ENCODE measurements at regions of chr22 and their contacts with region 1.

Region 1: DNA sequence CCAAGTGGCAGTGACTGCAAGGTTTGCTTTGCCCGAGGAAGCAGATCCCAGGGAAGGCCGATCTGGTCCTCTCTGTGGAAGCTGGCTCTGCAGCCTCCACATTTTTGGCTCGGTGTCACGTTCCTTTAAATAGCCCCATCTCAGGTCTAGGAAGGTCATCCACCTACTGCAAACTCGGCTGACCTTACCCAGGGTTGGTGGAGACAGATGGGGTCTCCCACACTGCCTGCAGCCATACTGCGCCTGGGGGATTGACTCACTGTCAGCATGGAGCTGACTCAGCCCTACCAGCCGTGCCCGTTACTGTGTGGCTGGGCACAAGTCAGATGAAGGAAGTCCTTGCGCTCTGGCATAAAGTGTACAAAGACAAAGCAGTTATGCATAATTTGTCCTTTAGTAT is 16.9 kb downstream of the CDPF1 start:
- DNase-seq: no peak
- ATAC-seq: no peak
- H3K4me3 ChIP-seq: no peak overlapping the region
- H3K4me3 Mint-ChIP-seq: no peak overlapping the region
- H3K27ac ChIP-seq: no peak overlapping the region
- H3K27ac Mint-ChIP-seq: no peak overlapping the region
- H3K4me1 ChIP-seq: no peaks in the 10 kb centered on the region
- H3K4me1 Mint-ChIP-seq: peaks cover under 1% of the 10 kb centered on the region
- H3K27me3 ChIP-seq: no peaks in the 10 kb centered on the region
- H3K27me3 Mint-ChIP-seq: no peaks in the 10 kb centered on the region
- CTCF ChIP-seq: no peak

Region 2: GRCh38 chr22:45817745-45818423 is 415.3 kb before region 1 on chr22:
- CTCF ChIA-PET with region 1: no interaction called
- POLR2A ChIA-PET with region 1: interaction called, 10 read pairs
- intact Hi-C with region 1: no loop called
- DNase-seq: no peak
- ATAC-seq: no peak
- H3K4me3 ChIP-seq: no peak overlapping the region
- H3K4me3 Mint-ChIP-seq: no peak overlapping the region
- H3K27ac ChIP-seq: no peak overlapping the region
- H3K27ac Mint-ChIP-seq: no peak overlapping the region
- H3K4me1 ChIP-seq: no peaks in the 10 kb centered on the region
- H3K4me1 Mint-ChIP-seq: no peaks in the 10 kb centered on the region
- H3K27me3 ChIP-seq: no peaks in the 10 kb centered on the region
- H3K27me3 Mint-ChIP-seq: no peaks in the 10 kb centered on the region
- CTCF ChIP-seq: no peak

Region 3: GRCh38 chr22:46116491-46116958 is 116.7 kb before region 1 on chr22:
- CTCF ChIA-PET with region 1: no interaction called
- POLR2A ChIA-PET with region 1: no interaction called
- intact Hi-C with region 1: no loop called
- DNase-seq: peak; percentile 91
- ATAC-seq: peak; percentile 98
- H3K4me3 ChIP-seq: no peak overlapping the region
- H3K4me3 Mint-ChIP-seq: no peak overlapping the region
- H3K27ac ChIP-seq: no peak overlapping the region
- H3K27ac Mint-ChIP-seq: no peak overlapping the region
- H3K4me1 ChIP-seq: peaks cover 0 to 8% of the 10 kb centered on the region in 2 donors
- H3K4me1 Mint-ChIP-seq: no peaks in the 10 kb centered on the region
- H3K27me3 ChIP-seq: no peaks in the 10 kb centered on the region
- H3K27me3 Mint-ChIP-seq: no peaks in the 10 kb centered on the region
- CTCF ChIP-seq: peak; percentile 87

Region 4: DNA sequence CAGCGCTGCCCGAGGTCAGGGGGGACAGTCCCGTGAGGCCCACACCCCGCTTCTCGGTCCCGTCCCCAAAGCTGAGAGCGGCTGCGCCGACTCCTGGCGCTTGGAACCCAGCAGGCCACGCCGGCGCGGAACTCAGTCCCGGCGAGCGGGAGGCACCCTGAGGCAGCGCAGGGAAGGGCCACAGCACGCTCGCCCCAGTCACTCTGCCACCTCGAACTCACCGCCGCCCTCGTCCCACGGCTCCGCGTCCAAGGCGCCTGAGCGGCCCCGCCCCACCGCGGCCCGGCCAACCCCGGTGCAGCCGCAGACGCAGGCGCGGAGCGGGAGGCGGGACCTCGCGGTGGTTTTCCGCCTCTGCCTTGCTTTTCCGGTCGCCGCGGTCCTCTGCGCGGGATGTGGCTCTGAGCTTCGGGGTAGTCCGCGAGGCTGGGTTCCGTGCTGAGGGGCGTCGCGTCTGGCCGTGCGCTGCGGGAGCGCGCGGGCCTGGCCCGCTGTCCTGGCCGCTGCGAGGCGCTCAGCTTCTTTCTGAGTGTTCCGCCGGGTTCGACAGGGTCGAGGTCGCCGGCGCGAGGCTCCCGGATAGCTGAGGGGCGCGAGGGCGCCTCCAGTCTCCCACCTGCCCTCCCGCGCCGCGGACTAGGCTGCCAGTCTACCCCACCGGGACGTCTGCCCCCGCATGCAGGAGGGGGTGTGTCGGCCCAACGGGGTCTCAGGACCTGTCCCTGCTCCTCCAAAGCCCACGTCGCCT is 17.0 kb after region 1 on chr22 and contains the start of gene CDPF1:
- CTCF ChIA-PET with region 1: no interaction called
- POLR2A ChIA-PET with region 1: no interaction called
- intact Hi-C with region 1: no loop called
- DNase-seq: peak; percentile 91
- ATAC-seq: peak; percentile 96
- H3K4me3 ChIP-seq: peak within 1 kb of the TSS in 4 of 5 experiments; percentile 72 to 85 (median 82)
- H3K4me3 Mint-ChIP-seq: peak within 1 kb of the TSS; percentile 87
- H3K27ac ChIP-seq: peak within 1 kb of the TSS; percentile 35 to 75
- H3K27ac Mint-ChIP-seq: peak within 1 kb of the TSS; percentile 80
- H3K4me1 ChIP-seq: peaks cover 14% of the 10 kb centered on the region in 2 donors
- H3K4me1 Mint-ChIP-seq: peaks cover 18% of the 10 kb centered on the region
- H3K27me3 ChIP-seq: no peaks in the 10 kb centered on the region
- H3K27me3 Mint-ChIP-seq: no peaks in the 10 kb centered on the region
- CTCF ChIP-seq: no peak
- total RNA-seq, gene CDPF1: 9.8 TPM in 2 replicates

Measured in B cell (primary cell).